SK-N-SH (cell line): ENCODE measurements at regions of chr20 and their contacts with region 1.

Region 1: DNA sequence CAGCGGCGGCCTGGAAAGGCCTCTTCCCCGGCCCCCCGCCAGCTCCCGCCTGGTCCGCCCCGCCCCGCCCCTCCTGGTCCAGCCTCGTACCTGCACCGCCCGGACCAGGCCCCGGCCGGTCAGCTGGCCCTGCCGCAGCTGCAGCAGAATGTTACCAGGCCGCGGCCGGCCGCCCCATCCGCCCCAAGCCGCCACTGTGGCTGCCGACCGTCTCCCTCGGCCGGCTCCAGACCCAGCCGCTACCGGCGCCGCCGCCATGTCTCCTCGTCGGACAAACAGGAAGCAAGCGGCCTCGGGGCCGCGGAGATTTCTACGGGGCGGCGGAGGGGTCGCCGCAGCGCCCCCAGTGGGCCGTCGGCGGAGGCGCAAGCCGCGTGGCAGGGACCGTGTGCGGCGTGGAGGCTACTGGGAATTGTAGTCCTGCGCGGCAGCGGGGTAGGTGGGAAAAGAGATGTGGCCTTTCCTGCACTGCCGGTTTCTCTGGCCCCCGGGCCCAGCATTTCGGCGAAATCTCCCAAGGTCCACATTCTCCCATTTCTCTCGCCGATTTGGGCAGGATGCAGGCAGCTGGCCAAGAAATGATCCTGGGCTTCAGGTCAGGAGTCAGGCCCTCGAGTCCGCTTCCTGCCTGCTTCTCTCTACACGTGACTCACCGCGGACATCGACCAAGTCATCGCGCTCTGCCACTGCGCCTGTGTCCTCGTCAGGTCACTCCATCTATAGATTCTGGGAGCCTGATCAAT is at the start of gene TRPC4AP:
- DNase-seq: peak; percentile 94
- H3K4me3 ChIP-seq: peak within 1 kb of the TSS; percentile 76 to 77
- H3K27ac ChIP-seq: peak within 1 kb of the TSS; percentile 68 to 83
- H3K4me1 ChIP-seq: peaks cover 8 to 15% of the 10 kb centered on the region in 2 experiments; a peak in 2 of 4 replicates
- H3K27me3 ChIP-seq: no peaks in the 10 kb centered on the region
- CTCF ChIP-seq: peak; percentile 90
- EP300 ChIP-seq: peak in 1 of 2 experiments; percentile 39; a peak in 1 of 4 replicates
- RAD21 ChIP-seq: peak; percentile 55
- polyA plus RNA-seq, gene TRPC4AP: 57.4 and 69.6 TPM in 2 replicates

Region 2: GRCh38 chr20:34876162-34877001 is 216.3 kb before region 1 on chr20 and contains the start of gene ACSS2:
- CTCF ChIA-PET with region 1: interaction called, 49 read pairs
- POLR2A ChIA-PET with region 1: interaction called, 3 read pairs
- DNase-seq: peak; percentile 96
- H3K4me3 ChIP-seq: peak within 1 kb of the TSS; percentile 64 to 79
- H3K27ac ChIP-seq: peak within 1 kb of the TSS in 1 of 2 experiments; percentile 39; a peak in 1 of 4 replicates
- H3K4me1 ChIP-seq: peaks cover 0 to 22% of the 10 kb centered on the region in 2 experiments; a peak in 2 of 4 replicates
- H3K27me3 ChIP-seq: no peaks in the 10 kb centered on the region
- CTCF ChIP-seq: no peak
- EP300 ChIP-seq: no peak
- RAD21 ChIP-seq: no peak
- polyA plus RNA-seq, gene ACSS2: 25.5 and 31.4 TPM in 2 replicates

Region 3: GRCh38 chr20:34977375-34978091 is 115.2 kb before region 1 on chr20:
- CTCF ChIA-PET with region 1: no interaction called
- POLR2A ChIA-PET with region 1: no interaction called
- DNase-seq: no peak
- H3K4me3 ChIP-seq: no peak overlapping the region
- H3K27ac ChIP-seq: no peak overlapping the region
- H3K4me1 ChIP-seq: peaks cover 0 to 7% of the 10 kb centered on the region in 2 experiments; a peak in 1 of 4 replicates
- H3K27me3 ChIP-seq: no peaks in the 10 kb centered on the region; the same call in 1 of the 2 replicates
- CTCF ChIP-seq: no peak
- EP300 ChIP-seq: no peak
- RAD21 ChIP-seq: no peak

Region 4: GRCh38 chr20:35111141-35111888 is 18.6 kb after region 1 on chr20:
- CTCF ChIA-PET with region 1: interaction called, 12 read pairs
- POLR2A ChIA-PET with region 1: no interaction called
- DNase-seq: no peak
- H3K4me3 ChIP-seq: no peak overlapping the region
- H3K27ac ChIP-seq: peak overlapping the region in 1 of 2 experiments; percentile 82; a peak in 2 of 4 replicates
- H3K4me1 ChIP-seq: peaks cover 0 to 17% of the 10 kb centered on the region in 2 experiments; a peak in 1 of 4 replicates
- H3K27me3 ChIP-seq: no peaks in the 10 kb centered on the region
- CTCF ChIP-seq: no peak
- EP300 ChIP-seq: no peak
- RAD21 ChIP-seq: no peak

Region 5: DNA sequence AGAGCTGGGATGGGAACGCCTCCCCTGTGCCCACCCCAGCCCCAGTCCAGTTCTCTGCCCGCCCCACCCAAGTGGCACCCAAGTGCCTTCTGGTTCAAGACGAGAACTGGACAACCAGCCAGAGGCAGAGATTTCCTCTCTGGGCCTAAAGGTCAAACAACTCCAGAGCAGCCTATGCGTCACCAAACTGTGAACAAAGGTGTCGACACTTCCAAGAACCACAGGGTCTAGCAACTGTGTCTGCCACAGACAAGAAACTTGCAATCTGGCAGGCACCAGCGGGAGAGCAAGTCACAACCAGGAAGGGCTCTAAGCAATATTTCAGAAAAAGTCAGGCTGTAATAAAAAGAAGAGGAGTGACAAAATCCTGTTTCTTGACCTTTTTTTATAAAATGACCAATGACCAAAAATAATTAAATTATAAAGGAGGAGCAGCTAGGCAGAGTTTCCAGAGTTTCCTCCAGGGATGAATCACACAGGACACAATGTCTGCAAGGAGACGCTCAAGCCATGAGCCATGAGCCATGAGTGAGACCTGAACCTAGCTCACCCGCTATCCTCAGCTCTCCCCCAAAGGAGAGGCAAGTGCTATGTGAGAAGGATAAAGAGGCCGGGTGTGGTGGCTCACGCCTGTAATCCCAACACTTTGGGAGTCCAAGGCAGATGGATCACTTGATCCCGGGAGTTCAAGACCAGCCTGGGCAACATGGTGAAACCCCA is 43.3 kb after region 1 on chr20:
- CTCF ChIA-PET with region 1: interaction called, 15 read pairs
- POLR2A ChIA-PET with region 1: no interaction called
- DNase-seq: no peak
- H3K4me3 ChIP-seq: no peak overlapping the region
- H3K27ac ChIP-seq: no peak overlapping the region
- H3K4me1 ChIP-seq: no peaks in the 10 kb centered on the region
- H3K27me3 ChIP-seq: no peaks in the 10 kb centered on the region
- CTCF ChIP-seq: no peak
- EP300 ChIP-seq: no peak
- RAD21 ChIP-seq: no peak

Region 6: DNA sequence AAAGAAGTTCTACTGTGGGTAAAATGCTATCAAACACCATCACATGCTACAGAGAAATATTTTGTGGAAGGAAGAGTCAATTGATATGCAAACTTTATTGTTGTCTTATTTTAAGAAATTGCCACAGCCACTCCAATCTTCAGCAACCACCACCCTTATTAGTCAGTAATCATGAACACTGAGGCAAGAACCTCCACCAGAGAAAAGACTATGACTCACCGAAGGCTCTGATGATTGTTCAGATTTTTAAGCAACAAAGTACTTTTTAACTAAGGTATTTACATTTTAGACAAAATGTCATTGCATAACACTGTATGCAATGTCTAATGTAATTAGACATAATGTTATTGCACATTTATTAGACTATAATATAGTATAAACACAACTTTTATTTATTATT is 107.6 kb after region 1 on chr20:
- CTCF ChIA-PET with region 1: interaction called, 14 read pairs
- POLR2A ChIA-PET with region 1: no interaction called
- DNase-seq: no peak
- H3K4me3 ChIP-seq: no peak overlapping the region
- H3K27ac ChIP-seq: peak overlapping the region in 1 of 2 experiments; percentile 30; a peak in 1 of 4 replicates
- H3K4me1 ChIP-seq: no peaks in the 10 kb centered on the region
- H3K27me3 ChIP-seq: no peaks in the 10 kb centered on the region
- CTCF ChIP-seq: no peak
- EP300 ChIP-seq: no peak
- RAD21 ChIP-seq: no peak

Region 7: GRCh38 chr20:35269055-35269781 is 176.5 kb after region 1 on chr20:
- CTCF ChIA-PET with region 1: interaction called, 20 read pairs
- POLR2A ChIA-PET with region 1: interaction called, 3 read pairs
- DNase-seq: peak; percentile 93
- H3K4me3 ChIP-seq: no peak overlapping the region; a peak in 1 of 4 replicates
- H3K27ac ChIP-seq: peak overlapping the region in 1 of 2 experiments; percentile 14; a peak in 1 of 4 replicates
- H3K4me1 ChIP-seq: peaks cover 0 to 12% of the 10 kb centered on the region in 2 experiments; a peak in 2 of 4 replicates
- H3K27me3 ChIP-seq: no peaks in the 10 kb centered on the region
- CTCF ChIP-seq: peak; percentile 87
- EP300 ChIP-seq: no peak
- RAD21 ChIP-seq: peak; percentile 83